Activated naive CD8-positive, alpha-beta T cell treated with anti-CD3 and anti-CD28 coated beads, Interleukin-2, amount 10 ng/mL, durations not matched to agents 7 days and 5 days (primary cell): ENCODE measurements at regions of chr5 and their contacts with region 1.

Region 1: GRCh38 chr5:151213800-151214613 is 9.9 kb downstream of the CCDC69 start:
- DNase-seq: peak; percentile 81
- ATAC-seq: peak; percentile 81
- H3K4me3 Mint-ChIP-seq: peak overlapping the region; percentile 90
- H3K27ac Mint-ChIP-seq: peak overlapping the region; percentile 98
- H3K4me1 Mint-ChIP-seq: peaks cover 70% of the 10 kb centered on the region
- H3K27me3 Mint-ChIP-seq: no peaks in the 10 kb centered on the region

Region 2: GRCh38 chr5:151157426-151158286 is 56.4 kb before region 1 on chr5 and contains the start of gene ANXA6:
- POLR2A ChIA-PET with region 1: interaction called, 20 read pairs
- DNase-seq: peak; percentile 80
- ATAC-seq: peak; percentile 66
- H3K4me3 Mint-ChIP-seq: peak within 1 kb of the TSS; percentile 97
- H3K27ac Mint-ChIP-seq: peak within 1 kb of the TSS; percentile 95
- H3K4me1 Mint-ChIP-seq: peaks cover 44% of the 10 kb centered on the region
- H3K27me3 Mint-ChIP-seq: peaks cover 2% of the 10 kb centered on the region
- total RNA-seq, gene ANXA6: 518 to 538 TPM

Region 3: GRCh38 chr5:151230048-151230680 is 16.2 kb after region 1 on chr5:
- POLR2A ChIA-PET with region 1: interaction called, 36 read pairs
- DNase-seq: no peak
- ATAC-seq: no peak
- H3K4me3 Mint-ChIP-seq: no peak overlapping the region
- H3K27ac Mint-ChIP-seq: no peak overlapping the region
- H3K4me1 Mint-ChIP-seq: peaks cover 20% of the 10 kb centered on the region
- H3K27me3 Mint-ChIP-seq: no peaks in the 10 kb centered on the region

Region 4: GRCh38 chr5:151239237-151239861 is 25.3 kb after region 1 on chr5:
- POLR2A ChIA-PET with region 1: interaction called, 36 read pairs
- DNase-seq: peak; percentile 75
- ATAC-seq: peak; percentile 66
- H3K4me3 Mint-ChIP-seq: peak overlapping the region; percentile 68
- H3K27ac Mint-ChIP-seq: peak overlapping the region; percentile 76
- H3K4me1 Mint-ChIP-seq: peaks cover 32% of the 10 kb centered on the region
- H3K27me3 Mint-ChIP-seq: no peaks in the 10 kb centered on the region

Region 5: GRCh38 chr5:151252762-151253604 is 39.0 kb after region 1 on chr5 and contains the start of gene GM2A:
- POLR2A ChIA-PET with region 1: interaction called, 31 read pairs
- DNase-seq: peak; percentile 95
- ATAC-seq: peak; percentile 96
- H3K4me3 Mint-ChIP-seq: peak within 1 kb of the TSS; percentile 95
- H3K27ac Mint-ChIP-seq: peak within 1 kb of the TSS; percentile 96
- H3K4me1 Mint-ChIP-seq: peaks cover 26% of the 10 kb centered on the region
- H3K27me3 Mint-ChIP-seq: no peaks in the 10 kb centered on the region
- total RNA-seq, gene GM2A: 19.3 to 20.6 TPM

Region 6: DNA sequence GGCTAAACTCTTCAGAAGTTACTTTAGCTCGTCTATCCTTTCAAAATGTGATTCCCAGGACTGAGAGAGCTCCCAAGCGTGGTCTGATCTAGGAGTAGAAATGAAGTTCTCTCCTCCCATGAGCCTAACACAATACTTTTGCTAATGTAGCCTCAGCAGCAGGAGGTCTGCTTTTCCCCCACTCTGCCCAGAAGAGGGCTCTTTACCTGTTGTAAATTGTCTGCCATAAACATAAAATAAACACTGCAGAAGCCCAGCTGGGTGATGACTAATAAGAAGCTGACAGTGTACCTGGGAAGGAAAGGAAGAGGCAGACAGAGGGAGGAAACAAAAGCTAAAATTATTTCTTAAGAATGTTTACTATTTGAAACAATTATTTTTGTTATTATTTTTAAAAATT is 74.2 kb after region 1 on chr5:
- POLR2A ChIA-PET with region 1: no interaction called
- DNase-seq: no peak
- ATAC-seq: no peak
- H3K4me3 Mint-ChIP-seq: no peak overlapping the region
- H3K27ac Mint-ChIP-seq: no peak overlapping the region
- H3K4me1 Mint-ChIP-seq: peaks cover 2% of the 10 kb centered on the region
- H3K27me3 Mint-ChIP-seq: peaks cover 7% of the 10 kb centered on the region

Region 7: GRCh38 chr5:151520294-151520693 is 306.3 kb after region 1 on chr5:
- POLR2A ChIA-PET with region 1: no interaction called
- DNase-seq: no peak
- ATAC-seq: no peak
- H3K4me3 Mint-ChIP-seq: no peak overlapping the region
- H3K27ac Mint-ChIP-seq: no peak overlapping the region
- H3K4me1 Mint-ChIP-seq: peaks cover 4% of the 10 kb centered on the region
- H3K27me3 Mint-ChIP-seq: no peaks in the 10 kb centered on the region